Activated CD4-positive, alpha-beta T cell treated with anti-CD3 and anti-CD28 coated beads for 36 hours (primary cell): ENCODE measurements at regions of chr17 and their contacts with region 1.

Region 1: GRCh38 chr17:32444308-32445073 is at the start of gene PSMD11:
- DNase-seq: peak; percentile 100
- ATAC-seq: peak; percentile 96
- H3K4me3 Mint-ChIP-seq: peak within 1 kb of the TSS; percentile 82
- H3K27ac Mint-ChIP-seq: peak within 1 kb of the TSS; percentile 95
- H3K4me1 Mint-ChIP-seq: peaks cover 32% of the 10 kb centered on the region
- H3K27me3 Mint-ChIP-seq: peaks cover 2% of the 10 kb centered on the region
- total RNA-seq, gene PSMD11: 109 to 135 TPM

Region 2: GRCh38 chr17:31931756-31932155 is 512.7 kb before region 1 on chr17:
- CTCF ChIA-PET with region 1: no interaction called
- POLR2A ChIA-PET with region 1: no interaction called
- intact Hi-C with region 1: loop called in 1 of 2 experiments (anchors 10 kb)
- DNase-seq: no peak
- ATAC-seq: no peak
- H3K4me3 Mint-ChIP-seq: no peak overlapping the region
- H3K27ac Mint-ChIP-seq: no peak overlapping the region
- H3K4me1 Mint-ChIP-seq: peaks cover 7% of the 10 kb centered on the region
- H3K27me3 Mint-ChIP-seq: no peaks in the 10 kb centered on the region

Region 3: DNA sequence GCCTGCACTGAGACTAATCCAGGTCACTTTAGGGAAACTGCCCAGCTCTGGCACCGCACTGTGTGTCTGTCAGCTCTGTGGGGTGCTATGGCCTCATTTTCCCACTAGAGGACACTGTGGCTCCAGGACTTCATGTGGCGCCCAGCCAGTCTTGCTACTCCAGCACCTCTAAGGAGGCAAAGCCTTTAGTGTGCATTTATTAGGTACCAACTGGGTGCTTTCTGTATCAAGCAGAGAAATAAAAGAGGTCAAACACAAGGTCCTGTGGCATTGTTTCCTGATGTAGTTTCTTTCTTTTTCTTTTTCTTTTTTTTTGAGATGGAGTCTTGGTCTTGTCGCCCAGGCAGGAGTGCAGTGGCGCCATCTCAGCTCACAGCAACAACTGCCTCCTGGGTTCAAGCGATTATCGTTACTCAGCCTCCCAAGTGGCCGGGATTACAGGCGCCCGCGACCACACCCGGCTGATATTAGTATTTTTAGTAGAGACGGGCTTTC is 191.3 kb before region 1 on chr17:
- CTCF ChIA-PET with region 1: no interaction called
- POLR2A ChIA-PET with region 1: no interaction called
- intact Hi-C with region 1: loop called (anchors 10 kb)
- DNase-seq: peak; percentile 85
- ATAC-seq: peak; percentile 100
- H3K4me3 Mint-ChIP-seq: no peak overlapping the region
- H3K27ac Mint-ChIP-seq: no peak overlapping the region
- H3K4me1 Mint-ChIP-seq: no peaks in the 10 kb centered on the region
- H3K27me3 Mint-ChIP-seq: no peaks in the 10 kb centered on the region

Region 4: DNA sequence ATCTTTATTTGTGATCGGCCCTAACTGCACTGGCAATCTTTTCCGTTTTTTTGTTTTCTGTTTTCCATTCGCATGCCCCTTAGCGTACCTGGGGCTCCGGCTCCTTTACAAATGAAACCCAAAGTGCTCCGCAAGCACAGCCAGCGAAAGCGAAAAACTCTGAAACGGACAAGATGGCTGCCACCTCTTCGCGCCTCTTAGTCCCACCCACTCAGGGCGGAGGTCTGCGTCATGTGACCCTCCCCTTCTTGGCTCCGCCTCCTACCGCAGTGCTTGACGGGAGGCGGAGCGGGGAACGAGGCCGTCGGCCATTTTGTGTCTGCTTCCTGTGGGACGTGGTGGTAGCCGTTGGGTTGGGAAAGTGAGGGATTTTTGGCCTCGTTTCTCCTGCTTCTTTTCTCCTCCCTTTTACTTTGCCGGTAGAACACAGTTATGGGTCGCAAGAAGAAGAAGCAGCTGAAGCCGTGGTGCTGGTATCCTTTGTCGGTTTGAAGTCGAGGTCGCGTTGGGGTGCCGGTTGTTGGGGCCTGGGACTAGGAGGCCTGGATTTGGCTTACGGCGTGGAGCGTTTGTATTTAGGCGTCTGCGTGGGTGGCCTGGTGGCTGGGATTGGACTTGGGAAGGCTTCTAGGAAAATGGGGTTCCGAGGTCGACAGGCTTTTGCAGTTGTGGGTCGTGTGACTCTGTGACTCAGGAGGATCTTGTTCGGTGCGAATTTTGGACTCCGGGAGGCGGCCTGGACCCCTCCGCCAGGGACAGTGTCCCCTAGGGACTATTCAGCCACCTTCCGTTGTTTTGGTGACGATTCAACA is 94.4 kb before region 1 on chr17 and contains the start of gene ZNF207:
- CTCF ChIA-PET with region 1: no interaction called
- POLR2A ChIA-PET with region 1: interaction called, 13 read pairs
- intact Hi-C with region 1: loop called (anchors 1 kb)
- DNase-seq: peak; percentile 98
- ATAC-seq: peak; percentile 97
- H3K4me3 Mint-ChIP-seq: peak within 1 kb of the TSS; percentile 99
- H3K27ac Mint-ChIP-seq: peak within 1 kb of the TSS; percentile 100
- H3K4me1 Mint-ChIP-seq: peaks cover 28% of the 10 kb centered on the region
- H3K27me3 Mint-ChIP-seq: no peaks in the 10 kb centered on the region
- total RNA-seq, gene ZNF207: 197 to 231 TPM

Region 5: GRCh38 chr17:32486111-32486700 is 41.7 kb after region 1 on chr17:
- CTCF ChIA-PET with region 1: interaction called, 7 read pairs
- POLR2A ChIA-PET with region 1: interaction called, 4 read pairs
- intact Hi-C with region 1: loop called in 1 of 2 experiments (anchors 1 kb)
- DNase-seq: peak; percentile 82
- ATAC-seq: peak; percentile 71
- H3K4me3 Mint-ChIP-seq: peak overlapping the region; percentile 54
- H3K27ac Mint-ChIP-seq: no peak overlapping the region
- H3K4me1 Mint-ChIP-seq: peaks cover 48% of the 10 kb centered on the region
- H3K27me3 Mint-ChIP-seq: no peaks in the 10 kb centered on the region

Region 6: GRCh38 chr17:32992321-32993033 is 548.0 kb after region 1 on chr17:
- CTCF ChIA-PET with region 1: no interaction called
- POLR2A ChIA-PET with region 1: no interaction called
- intact Hi-C with region 1: no loop called
- DNase-seq: no peak
- ATAC-seq: no peak
- H3K4me3 Mint-ChIP-seq: no peak overlapping the region
- H3K27ac Mint-ChIP-seq: no peak overlapping the region
- H3K4me1 Mint-ChIP-seq: no peaks in the 10 kb centered on the region
- H3K27me3 Mint-ChIP-seq: peaks cover 6% of the 10 kb centered on the region